ENCODE measurements at regions of chr2 and their contacts with region 1.

Region 1: GRCh38 chr2:11129598-11130449 is 25.4 kb upstream of the SLC66A3 start:
- DNase-seq: peak; percentile 76 to 97
- H3K4me3 ChIP-seq: peak overlapping the region; percentile 32 to 56 (median 46); a peak in 7 of 8 replicates
- H3K27ac ChIP-seq: no peak overlapping the region
- H3K4me1 ChIP-seq: peaks cover 3 to 11% (median 6%) of the 10 kb centered on the region in 4 experiments
- H3K27me3 ChIP-seq: no peaks in the 10 kb centered on the region; a peak in 2 of 7 replicates
- CTCF ChIP-seq: peak; percentile 58 to 72 (median 67)
- EP300 ChIP-seq: peak in 1 of 2 experiments; percentile 54; a peak in 1 of 3 replicates
- POLR2A ChIP-seq: no peak
- RAD21 ChIP-seq: peak; percentile 74 to 80

Region 2: GRCh38 chr2:10620481-10620880 is 509.3 kb before region 1 on chr2:
- CTCF ChIA-PET with region 1: no interaction called
- POLR2A ChIA-PET with region 1: no interaction called
- DNase-seq: no peak
- H3K4me3 ChIP-seq: no peak overlapping the region
- H3K27ac ChIP-seq: no peak overlapping the region
- H3K4me1 ChIP-seq: no peaks in the 10 kb centered on the region; a peak in 1 of 7 replicates
- H3K27me3 ChIP-seq: no peaks in the 10 kb centered on the region
- CTCF ChIP-seq: no peak
- EP300 ChIP-seq: no peak
- POLR2A ChIP-seq: no peak
- RAD21 ChIP-seq: no peak

Region 3: DNA sequence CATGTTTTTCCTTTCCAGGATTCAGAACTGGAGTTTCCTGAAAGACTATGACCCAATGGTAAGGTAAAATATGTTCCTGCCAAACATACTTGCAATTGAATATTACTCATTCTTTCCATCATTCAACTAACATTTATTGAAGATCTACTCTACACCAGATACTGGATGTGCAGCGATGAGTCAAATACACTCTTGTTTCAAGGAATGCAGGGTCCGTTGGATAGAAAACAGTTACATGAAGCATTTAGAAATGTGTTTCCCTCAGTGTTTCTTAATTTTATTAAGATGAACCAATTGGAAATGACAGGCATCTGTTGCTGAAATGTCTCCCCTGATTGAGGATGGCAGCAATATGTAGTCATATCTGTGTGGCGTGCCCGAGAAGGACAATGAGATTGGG is 10.7 kb after region 1 on chr2:
- CTCF ChIA-PET with region 1: interaction called, 90 read pairs
- POLR2A ChIA-PET with region 1: interaction called, 5 read pairs
- DNase-seq: no peak
- H3K4me3 ChIP-seq: no peak overlapping the region
- H3K27ac ChIP-seq: no peak overlapping the region
- H3K4me1 ChIP-seq: no peaks in the 10 kb centered on the region
- H3K27me3 ChIP-seq: no peaks in the 10 kb centered on the region
- CTCF ChIP-seq: no peak
- EP300 ChIP-seq: no peak
- POLR2A ChIP-seq: no peak
- RAD21 ChIP-seq: no peak

Region 4: GRCh38 chr2:11168488-11168887 is 38.7 kb after region 1 on chr2:
- CTCF ChIA-PET with region 1: interaction called, 29 read pairs
- POLR2A ChIA-PET with region 1: no interaction called
- DNase-seq: no peak
- H3K4me3 ChIP-seq: no peak overlapping the region
- H3K27ac ChIP-seq: no peak overlapping the region
- H3K4me1 ChIP-seq: no peaks in the 10 kb centered on the region
- H3K27me3 ChIP-seq: no peaks in the 10 kb centered on the region
- CTCF ChIP-seq: no peak
- EP300 ChIP-seq: no peak
- POLR2A ChIP-seq: no peak
- RAD21 ChIP-seq: no peak

Region 5: GRCh38 chr2:11406267-11406957 is 276.6 kb after region 1 on chr2:
- CTCF ChIA-PET with region 1: interaction called, 54 read pairs
- POLR2A ChIA-PET with region 1: no interaction called
- DNase-seq: no peak
- H3K4me3 ChIP-seq: no peak overlapping the region
- H3K27ac ChIP-seq: no peak overlapping the region
- H3K4me1 ChIP-seq: peaks cover 0 to 6% (median 0%) of the 10 kb centered on the region in 4 experiments; a peak in 2 of 7 replicates
- H3K27me3 ChIP-seq: no peaks in the 10 kb centered on the region
- CTCF ChIP-seq: no peak
- EP300 ChIP-seq: no peak
- POLR2A ChIP-seq: no peak
- RAD21 ChIP-seq: no peak

Region 6: GRCh38 chr2:11446733-11447248 is 317.0 kb after region 1 on chr2:
- CTCF ChIA-PET with region 1: interaction called, 70 read pairs
- POLR2A ChIA-PET with region 1: no interaction called
- DNase-seq: peak; percentile 51 to 85
- H3K4me3 ChIP-seq: no peak overlapping the region
- H3K27ac ChIP-seq: no peak overlapping the region
- H3K4me1 ChIP-seq: no peaks in the 10 kb centered on the region
- H3K27me3 ChIP-seq: no peaks in the 10 kb centered on the region
- CTCF ChIP-seq: peak; percentile 64 to 88 (median 85)
- EP300 ChIP-seq: no peak
- POLR2A ChIP-seq: no peak
- RAD21 ChIP-seq: peak; percentile 86 to 92